Panc1 (cell line): ENCODE measurements at regions of chr4 and their contacts with region 1.

Region 1: DNA sequence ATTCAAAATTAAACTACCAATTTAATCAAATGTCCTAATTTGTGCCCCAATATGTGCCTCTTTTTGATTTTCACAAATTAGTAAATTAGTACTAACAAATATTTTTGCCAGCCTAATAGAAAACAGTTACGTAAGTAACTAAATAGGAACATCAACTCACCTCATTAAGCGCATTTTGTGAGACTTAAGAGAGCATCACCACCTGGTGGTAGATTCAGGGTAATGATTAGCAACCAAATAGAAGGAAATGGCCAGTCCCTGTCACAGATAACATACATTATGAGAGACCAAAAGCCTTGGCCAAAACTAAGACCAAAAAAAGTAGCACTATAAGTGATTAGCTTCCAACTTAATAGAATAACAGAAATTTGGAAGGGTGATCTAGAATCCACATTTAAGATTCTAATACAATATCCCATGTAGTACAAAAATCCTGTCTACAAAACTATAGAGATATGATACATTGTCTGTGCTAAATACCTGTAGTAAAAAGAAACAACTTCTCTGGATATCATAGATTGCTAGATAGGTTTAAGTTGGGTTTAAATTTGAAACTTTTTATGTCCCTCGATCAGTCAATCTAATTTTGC is 46.7 kb downstream of the C4orf46 start:
- DNase-seq: peak; percentile 27
- ATAC-seq: no peak
- H3K4me3 ChIP-seq: no peak overlapping the region
- H3K27ac ChIP-seq: no peak overlapping the region
- H3K4me1 ChIP-seq: no peaks in the 10 kb centered on the region
- H3K27me3 ChIP-seq: no peaks in the 10 kb centered on the region
- CTCF ChIP-seq: peak; percentile 62; the same call in 1 of the 2 replicates

Region 2: GRCh38 chr4:157992038-157992705 is 632.8 kb before region 1 on chr4:
- CTCF ChIA-PET with region 1: no interaction called
- POLR2A ChIA-PET with region 1: no interaction called
- in situ Hi-C with region 1: no loop called
- intact Hi-C with region 1: loop called (anchors 10 kb)
- DNase-seq: no peak
- ATAC-seq: no peak
- H3K4me3 ChIP-seq: no peak overlapping the region; a peak in 1 of 4 replicates
- H3K27ac ChIP-seq: no peak overlapping the region
- H3K4me1 ChIP-seq: no peaks in the 10 kb centered on the region; the same call in 1 of the 2 replicates
- H3K27me3 ChIP-seq: no peaks in the 10 kb centered on the region
- CTCF ChIP-seq: peak; percentile 50; the same call in 1 of the 2 replicates

Region 3: GRCh38 chr4:158253350-158253980 is 371.5 kb before region 1 on chr4:
- CTCF ChIA-PET with region 1: no interaction called
- POLR2A ChIA-PET with region 1: no interaction called
- in situ Hi-C with region 1: no loop called
- intact Hi-C with region 1: loop called (anchors 2 kb)
- DNase-seq: peak; percentile 41
- ATAC-seq: peak; percentile 75; the same call in 1 of the 2 replicates
- H3K4me3 ChIP-seq: no peak overlapping the region
- H3K27ac ChIP-seq: no peak overlapping the region
- H3K4me1 ChIP-seq: no peaks in the 10 kb centered on the region
- H3K27me3 ChIP-seq: no peaks in the 10 kb centered on the region
- CTCF ChIP-seq: peak; percentile 66

Region 4: DNA sequence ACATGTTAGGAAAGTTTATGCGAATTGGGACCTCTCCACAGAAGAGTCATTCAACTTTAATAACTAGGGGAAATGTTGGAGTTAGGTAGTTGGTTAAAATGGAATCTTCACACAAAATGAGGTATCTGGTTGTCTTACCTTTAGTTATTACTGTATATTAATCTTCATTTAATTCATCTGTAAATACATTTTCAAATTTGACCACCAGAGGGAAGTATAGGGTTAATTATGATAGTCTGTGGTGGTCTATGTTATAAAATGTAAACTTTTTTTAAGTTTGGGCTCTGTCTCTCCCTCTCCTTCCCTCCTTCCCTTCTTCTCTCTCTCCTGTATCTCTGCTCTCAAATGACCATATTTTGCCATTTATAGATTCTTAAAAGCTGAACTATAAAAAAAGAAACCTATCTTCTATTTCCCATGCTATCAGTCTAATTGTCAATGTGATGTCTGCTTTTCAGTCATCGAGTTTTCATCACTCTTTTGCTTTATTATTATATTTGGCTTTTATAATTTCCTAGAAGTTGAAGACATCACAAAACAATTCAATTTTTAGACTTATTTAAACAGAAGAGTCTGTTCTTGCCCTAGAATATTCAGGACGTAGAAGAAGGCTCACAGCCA is 364.9 kb before region 1 on chr4:
- CTCF ChIA-PET with region 1: no interaction called
- POLR2A ChIA-PET with region 1: no interaction called
- in situ Hi-C with region 1: no loop called
- intact Hi-C with region 1: loop called (anchors 1 kb)
- DNase-seq: no peak
- ATAC-seq: no peak
- H3K4me3 ChIP-seq: no peak overlapping the region
- H3K27ac ChIP-seq: no peak overlapping the region
- H3K4me1 ChIP-seq: no peaks in the 10 kb centered on the region
- H3K27me3 ChIP-seq: no peaks in the 10 kb centered on the region
- CTCF ChIP-seq: peak; percentile 36; the same call in 1 of the 2 replicates

Region 5: DNA sequence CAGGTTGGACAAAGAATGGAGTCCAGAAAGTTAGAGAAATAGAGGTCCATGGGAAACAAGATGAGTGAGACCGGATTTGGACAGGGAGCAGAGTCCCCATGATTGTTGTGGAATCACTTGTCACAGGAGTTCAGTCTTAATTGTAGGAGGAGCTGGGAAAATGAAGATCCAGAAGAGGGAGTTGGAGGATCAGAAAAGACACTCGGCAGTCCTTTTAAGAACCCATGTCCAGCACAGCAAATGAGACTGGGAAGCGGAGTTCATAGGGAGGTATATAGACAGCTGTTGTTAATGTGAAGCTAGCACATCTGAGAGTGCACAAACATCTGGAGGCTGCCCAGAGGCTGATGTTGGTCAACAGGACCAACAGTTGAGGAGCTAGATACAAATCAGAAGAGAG is 214.7 kb before region 1 on chr4:
- CTCF ChIA-PET with region 1: no interaction called
- POLR2A ChIA-PET with region 1: no interaction called
- in situ Hi-C with region 1: no loop called
- intact Hi-C with region 1: loop called (anchors 10 kb)
- DNase-seq: no peak
- ATAC-seq: no peak
- H3K4me3 ChIP-seq: no peak overlapping the region
- H3K27ac ChIP-seq: no peak overlapping the region
- H3K4me1 ChIP-seq: no peaks in the 10 kb centered on the region
- H3K27me3 ChIP-seq: no peaks in the 10 kb centered on the region
- CTCF ChIP-seq: peak; percentile 18; the same call in 1 of the 2 replicates

Region 6: DNA sequence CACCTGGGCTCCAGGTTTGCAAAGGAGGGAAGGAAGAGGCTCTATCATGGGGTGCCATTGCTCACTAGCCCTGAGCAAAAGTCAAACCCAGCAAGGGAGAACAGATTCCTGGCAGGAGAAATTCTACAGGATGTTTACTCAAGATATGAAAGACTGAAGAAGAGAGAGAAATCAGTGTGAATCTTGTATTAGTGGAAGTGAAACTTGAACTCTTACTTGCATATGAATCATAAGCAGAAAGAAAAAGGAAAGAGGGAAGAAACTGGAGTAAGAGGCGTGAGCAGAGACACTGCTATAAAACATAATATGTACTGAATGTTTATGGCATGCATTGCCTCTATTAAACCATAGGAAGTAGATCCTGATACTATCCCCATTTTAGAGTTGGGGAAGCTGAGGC is 14.2 kb before region 1 on chr4:
- CTCF ChIA-PET with region 1: no interaction called
- POLR2A ChIA-PET with region 1: no interaction called
- in situ Hi-C with region 1: no loop called
- intact Hi-C with region 1: no loop called
- DNase-seq: no peak
- ATAC-seq: no peak
- H3K4me3 ChIP-seq: no peak overlapping the region
- H3K27ac ChIP-seq: no peak overlapping the region
- H3K4me1 ChIP-seq: no peaks in the 10 kb centered on the region
- H3K27me3 ChIP-seq: no peaks in the 10 kb centered on the region
- CTCF ChIP-seq: no peak